PC-9 (cell line): ENCODE measurements at regions of chr19 and their contacts with region 1.

Region 1: DNA sequence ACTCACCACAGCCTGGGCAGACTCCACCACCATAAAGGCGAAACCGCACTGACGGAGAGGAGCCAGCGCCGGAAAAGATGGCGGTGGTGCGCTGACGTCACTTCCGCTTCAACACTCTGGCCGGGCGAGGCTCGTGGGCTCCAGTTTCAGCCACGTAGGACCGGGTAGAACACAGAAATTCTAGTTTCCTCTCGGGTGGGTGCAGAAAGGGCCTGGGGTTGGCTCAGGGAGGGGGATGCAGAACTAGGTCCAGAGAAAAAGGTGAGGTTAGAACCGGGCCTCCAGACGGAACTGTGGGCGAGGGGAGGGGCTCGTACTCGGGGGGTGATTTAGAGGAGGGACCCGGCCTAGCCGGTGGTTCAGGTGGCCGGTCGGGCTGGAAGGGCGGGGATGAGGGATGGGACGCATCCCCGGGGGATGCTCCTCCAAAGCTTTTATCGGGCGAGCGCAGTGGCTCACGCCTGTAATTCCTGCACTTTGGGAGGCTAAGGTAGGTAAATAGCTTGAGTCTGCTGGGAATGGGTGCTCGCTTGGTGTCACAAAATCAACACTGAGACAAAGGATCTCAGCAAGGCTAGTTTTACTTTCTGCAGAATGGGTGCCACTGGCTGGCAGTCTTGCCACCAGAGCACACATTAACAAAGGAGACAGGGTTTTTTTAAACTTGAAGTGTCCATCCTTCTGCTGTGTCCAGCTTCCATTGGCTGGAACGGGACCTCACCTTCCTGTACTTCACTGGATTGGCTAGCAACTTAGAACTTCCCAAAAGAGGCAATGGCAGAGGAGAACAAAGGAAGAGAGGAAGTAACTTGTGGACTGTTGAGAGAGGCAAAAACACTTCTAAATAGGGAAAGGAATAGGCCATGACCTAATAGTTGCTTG is at the start of gene ZNF561:
- DNase-seq: peak; percentile 62 to 74
- H3K4me3 ChIP-seq: peak within 1 kb of the TSS; percentile 86
- H3K27ac ChIP-seq: peak within 1 kb of the TSS; percentile 65
- H3K4me1 ChIP-seq: peaks cover 9% of the 10 kb centered on the region
- H3K27me3 ChIP-seq: no peaks in the 10 kb centered on the region
- CTCF ChIP-seq: no peak
- total RNA-seq, gene ZNF561: 28.9 and 31.2 TPM in 2 replicates

Region 2: GRCh38 chr19:9768175-9769112 is 147.0 kb after region 1 on chr19 and contains the start of gene ZNF846:
- CTCF ChIA-PET with region 1: no interaction called
- POLR2A ChIA-PET with region 1: interaction called, 10 read pairs
- intact Hi-C with region 1: no loop called
- DNase-seq: peak; percentile 94 to 96
- H3K4me3 ChIP-seq: peak within 1 kb of the TSS; percentile 78
- H3K27ac ChIP-seq: peak within 1 kb of the TSS; percentile 76
- H3K4me1 ChIP-seq: peaks cover 5% of the 10 kb centered on the region; the same call in 1 of the 2 replicates
- H3K27me3 ChIP-seq: no peaks in the 10 kb centered on the region
- CTCF ChIP-seq: no peak
- total RNA-seq, gene ZNF846: 8.3 and 9.6 TPM in 2 replicates

Region 3: GRCh38 chr19:9785367-9786331 is 164.3 kb after region 1 on chr19:
- CTCF ChIA-PET with region 1: no interaction called
- POLR2A ChIA-PET with region 1: no interaction called
- intact Hi-C with region 1: no loop called
- DNase-seq: peak; percentile 92 to 96
- H3K4me3 ChIP-seq: peak overlapping the region; percentile 62
- H3K27ac ChIP-seq: peak overlapping the region; percentile 83
- H3K4me1 ChIP-seq: peaks cover 18% of the 10 kb centered on the region
- H3K27me3 ChIP-seq: no peaks in the 10 kb centered on the region
- CTCF ChIP-seq: no peak

Region 4: GRCh38 chr19:9834726-9835506 is 213.5 kb after region 1 on chr19 and contains the start of gene PIN1:
- CTCF ChIA-PET with region 1: no interaction called
- POLR2A ChIA-PET with region 1: no interaction called
- intact Hi-C with region 1: no loop called
- DNase-seq: peak; percentile 96 to 98
- H3K4me3 ChIP-seq: peak within 1 kb of the TSS; percentile 96
- H3K27ac ChIP-seq: no peak within 1 kb of the TSS
- H3K4me1 ChIP-seq: peaks cover 10% of the 10 kb centered on the region
- H3K27me3 ChIP-seq: no peaks in the 10 kb centered on the region
- CTCF ChIP-seq: peak; percentile 59; the same call in 1 of the 2 replicates
- total RNA-seq, gene PIN1: 72.2 and 74.1 TPM in 2 replicates

Region 5: DNA sequence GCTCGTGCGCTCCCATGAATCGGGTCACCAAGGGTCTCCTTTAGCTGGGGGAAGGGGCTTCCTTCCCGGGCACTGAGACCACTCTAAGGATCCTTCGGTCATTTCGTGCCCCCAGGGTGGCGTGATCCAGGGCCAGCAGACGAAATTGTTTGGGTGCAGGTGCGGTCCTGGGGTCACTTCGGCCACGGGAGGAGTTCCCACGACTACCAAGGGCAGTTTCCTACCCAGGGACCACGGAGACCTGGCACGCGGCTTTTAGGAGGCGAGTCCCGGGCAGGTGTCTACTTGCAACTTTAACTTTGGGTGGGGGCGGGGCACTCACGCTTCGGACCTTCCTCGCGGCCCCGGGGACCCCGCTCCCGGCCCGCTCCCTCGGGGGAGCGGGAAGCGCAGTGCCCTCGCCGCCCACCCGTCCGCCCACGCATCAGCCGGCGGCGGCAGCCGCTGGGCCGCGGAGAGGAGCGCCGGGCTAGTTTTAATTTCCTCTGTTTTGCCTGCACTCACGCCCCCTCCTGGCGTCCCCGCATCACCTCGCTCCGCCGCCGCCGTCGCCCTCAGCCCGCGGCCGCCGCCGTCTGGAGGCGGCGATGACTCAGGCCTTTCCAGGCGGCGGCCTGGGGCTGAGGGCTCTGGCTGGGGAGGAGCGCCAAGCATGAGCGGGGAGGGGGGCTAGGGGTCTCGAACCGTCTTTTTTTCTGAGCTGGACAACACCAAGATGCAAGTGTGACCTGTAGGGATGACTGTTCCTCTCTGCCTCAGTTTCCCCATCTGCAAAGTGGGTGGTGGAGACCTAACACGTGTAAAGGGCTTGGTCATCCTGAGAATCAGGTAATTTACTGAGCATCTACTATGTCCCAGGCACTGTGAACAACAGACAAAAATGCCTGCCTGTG is 293.2 kb after region 1 on chr19:
- CTCF ChIA-PET with region 1: no interaction called
- POLR2A ChIA-PET with region 1: no interaction called
- intact Hi-C with region 1: loop called (anchors 10 kb)
- DNase-seq: peak; percentile 63 to 85
- H3K4me3 ChIP-seq: peak overlapping the region; percentile 68
- H3K27ac ChIP-seq: no peak overlapping the region
- H3K4me1 ChIP-seq: no peaks in the 10 kb centered on the region
- H3K27me3 ChIP-seq: no peaks in the 10 kb centered on the region
- CTCF ChIP-seq: peak; percentile 84